ENCODE measurements at regions of chr1 and their contacts with region 1.

Region 1: DNA sequence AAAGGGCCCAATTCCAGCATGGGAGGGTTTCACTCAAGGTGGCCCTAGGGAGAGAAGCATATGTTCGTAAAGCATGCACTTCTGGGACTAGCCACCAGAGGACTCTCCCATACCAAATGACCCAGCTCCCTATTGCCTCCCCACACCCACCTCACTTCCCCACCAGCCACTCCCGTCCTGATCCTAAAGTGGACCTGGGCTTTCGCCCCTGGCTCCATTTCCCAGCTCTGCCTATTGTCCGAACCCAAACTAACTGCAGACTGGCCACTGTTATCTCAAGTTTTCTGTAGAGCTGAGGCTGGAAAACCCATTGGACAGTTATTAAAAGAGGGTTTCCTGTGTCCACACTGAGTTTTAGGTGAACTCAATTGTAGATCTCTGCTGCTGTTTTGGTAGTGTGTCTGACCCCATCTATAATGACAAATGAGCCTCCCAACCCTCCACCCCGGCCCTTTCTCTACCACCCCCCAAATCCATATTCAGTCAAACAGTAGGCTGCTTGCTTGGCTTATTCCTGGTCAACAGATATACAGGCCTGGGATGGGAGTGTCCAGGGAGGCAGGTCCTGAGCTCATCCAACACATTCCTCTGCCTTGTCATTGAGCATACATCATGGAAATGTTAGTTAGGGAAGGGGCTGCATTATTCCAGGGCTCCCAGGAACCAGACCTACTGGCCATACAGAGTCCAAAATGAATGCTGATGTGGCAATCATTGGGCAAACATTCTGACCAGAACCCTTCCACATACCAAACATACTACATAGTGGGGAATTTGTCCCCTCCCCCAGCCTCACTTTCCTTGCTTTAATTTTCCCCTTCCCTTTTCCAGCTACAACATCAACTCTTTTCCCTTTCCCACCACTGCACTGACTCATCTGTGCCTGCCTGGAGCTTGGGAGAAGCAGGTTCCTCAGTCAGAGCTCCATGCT is 59.2 kb downstream of the ABCA4 start:
- DNase-seq: peak; percentile 86
- H3K4me3 ChIP-seq: no peak overlapping the region
- H3K27ac ChIP-seq: peak overlapping the region; percentile 76
- H3K4me1 ChIP-seq: peaks cover 48% of the 10 kb centered on the region
- H3K27me3 ChIP-seq: no peaks in the 10 kb centered on the region
- CTCF ChIP-seq: peak; percentile 92 to 93
- POLR2A ChIP-seq: peak; percentile 36

Region 2: GRCh38 chr1:94039514-94039870 is 22.3 kb before region 1 on chr1:
- CTCF ChIA-PET with region 1: interaction called, 71 read pairs
- POLR2A ChIA-PET with region 1: no interaction called
- dilution Hi-C with region 1: no loop called
- intact Hi-C with region 1: no loop called
- DNase-seq: peak; percentile 88
- H3K4me3 ChIP-seq: no peak overlapping the region
- H3K27ac ChIP-seq: peak overlapping the region; percentile 98
- H3K4me1 ChIP-seq: peaks cover 43% of the 10 kb centered on the region
- H3K27me3 ChIP-seq: no peaks in the 10 kb centered on the region
- CTCF ChIP-seq: peak; percentile 86 to 97
- POLR2A ChIP-seq: no peak

Region 3: GRCh38 chr1:94101541-94102525 is 40.1 kb after region 1 on chr1:
- CTCF ChIA-PET with region 1: interaction called, 24 read pairs
- POLR2A ChIA-PET with region 1: no interaction called
- dilution Hi-C with region 1: no loop called
- intact Hi-C with region 1: no loop called
- DNase-seq: no peak
- H3K4me3 ChIP-seq: no peak overlapping the region
- H3K27ac ChIP-seq: no peak overlapping the region
- H3K4me1 ChIP-seq: peaks cover 9% of the 10 kb centered on the region
- H3K27me3 ChIP-seq: no peaks in the 10 kb centered on the region
- CTCF ChIP-seq: no peak
- POLR2A ChIP-seq: no peak

Region 4: DNA sequence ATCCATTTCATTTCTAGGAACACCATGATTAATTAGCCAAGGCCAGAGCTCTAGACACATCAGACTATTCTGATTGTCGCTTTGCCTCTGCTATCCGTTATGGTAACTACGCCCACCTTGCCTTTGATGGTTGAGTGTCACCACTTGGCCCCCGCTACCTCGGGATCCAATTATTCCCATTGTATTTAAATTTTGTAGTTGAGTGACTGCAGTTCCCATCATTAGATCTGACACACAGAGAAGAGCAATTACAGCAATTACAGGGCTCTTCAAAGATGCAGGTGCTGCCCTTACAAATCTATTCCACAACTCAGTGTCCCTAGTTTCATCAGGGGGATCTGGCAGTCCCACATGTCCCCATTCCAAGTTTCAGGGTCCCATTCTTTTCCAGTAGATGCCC is 104.1 kb after region 1 on chr1:
- CTCF ChIA-PET with region 1: interaction called, 26 read pairs
- POLR2A ChIA-PET with region 1: no interaction called
- dilution Hi-C with region 1: no loop called
- intact Hi-C with region 1: no loop called
- DNase-seq: no peak
- H3K4me3 ChIP-seq: no peak overlapping the region
- H3K27ac ChIP-seq: no peak overlapping the region
- H3K4me1 ChIP-seq: peaks cover 5% of the 10 kb centered on the region
- H3K27me3 ChIP-seq: no peaks in the 10 kb centered on the region
- CTCF ChIP-seq: no peak
- POLR2A ChIP-seq: no peak

Region 5: DNA sequence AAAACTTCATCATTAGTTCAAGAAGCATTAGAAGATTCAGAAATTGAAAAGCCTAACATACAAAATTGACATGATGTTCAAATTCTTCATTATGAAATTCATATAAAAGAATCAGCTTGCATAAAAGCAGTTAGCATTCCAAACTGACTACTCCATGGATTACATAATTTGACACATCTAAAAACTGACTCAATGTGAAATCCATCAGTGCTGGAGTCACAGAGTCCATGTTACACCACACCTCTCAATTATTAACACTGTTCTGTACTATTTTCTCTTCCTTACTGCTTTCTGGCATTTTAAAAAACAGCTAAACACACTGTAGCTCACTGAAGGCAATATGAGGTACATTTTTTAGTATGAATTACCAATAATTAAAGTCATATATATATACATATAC is 147.6 kb after region 1 on chr1:
- CTCF ChIA-PET with region 1: interaction called, 24 read pairs
- POLR2A ChIA-PET with region 1: no interaction called
- dilution Hi-C with region 1: no loop called
- intact Hi-C with region 1: no loop called
- DNase-seq: no peak
- H3K4me3 ChIP-seq: no peak overlapping the region
- H3K27ac ChIP-seq: no peak overlapping the region
- H3K4me1 ChIP-seq: peaks cover 38% of the 10 kb centered on the region
- H3K27me3 ChIP-seq: no peaks in the 10 kb centered on the region
- CTCF ChIP-seq: no peak
- POLR2A ChIP-seq: no peak

Region 6: DNA sequence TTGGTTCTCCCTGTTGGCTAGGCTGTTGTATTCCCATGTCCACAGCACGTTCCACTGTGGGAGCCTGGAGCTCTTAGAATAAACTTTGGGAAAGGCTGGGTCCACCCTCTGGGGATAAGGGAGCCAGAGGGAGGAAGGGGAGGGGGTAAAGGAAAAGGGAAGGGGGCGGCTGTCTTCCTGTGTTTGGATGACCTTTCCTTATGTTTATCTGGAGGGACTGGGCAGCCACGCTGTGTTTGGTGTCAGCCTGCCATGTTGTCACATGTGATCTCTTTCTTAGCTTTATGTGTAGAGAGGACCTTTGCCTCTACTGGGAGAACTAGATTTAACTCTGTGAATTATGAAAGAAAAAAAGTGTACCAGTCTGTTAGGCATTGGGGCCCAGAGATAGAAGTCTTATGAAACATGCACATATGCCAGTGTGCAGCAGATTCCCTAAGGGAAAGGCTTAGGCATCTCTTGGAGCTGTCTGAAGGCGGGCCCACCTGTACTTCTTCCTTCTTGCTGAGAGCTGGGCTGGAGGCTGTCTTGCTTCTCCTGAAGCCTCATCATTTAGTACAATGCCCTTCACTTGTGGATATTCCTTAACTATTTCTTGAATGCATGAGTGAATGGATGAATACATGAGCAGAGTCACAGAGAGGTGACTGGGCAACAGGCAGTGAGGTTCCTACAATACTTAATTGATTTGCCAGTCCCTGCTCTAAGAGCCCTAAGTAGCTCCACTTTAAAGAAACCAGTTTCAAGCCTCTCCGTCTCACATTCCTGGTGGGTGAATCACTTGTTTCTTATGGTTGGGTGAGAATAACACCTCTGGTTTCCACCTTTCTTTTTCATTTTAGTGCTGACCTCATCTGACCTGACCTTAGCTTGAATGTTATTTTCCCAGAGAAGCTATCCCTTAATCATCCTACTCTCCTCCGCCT is 238.1 kb after region 1 on chr1:
- CTCF ChIA-PET with region 1: interaction called, 10 read pairs
- POLR2A ChIA-PET with region 1: no interaction called
- dilution Hi-C with region 1: no loop called
- intact Hi-C with region 1: no loop called
- DNase-seq: peak; percentile 88
- H3K4me3 ChIP-seq: no peak overlapping the region
- H3K27ac ChIP-seq: peak overlapping the region; percentile 70
- H3K4me1 ChIP-seq: peaks cover 81% of the 10 kb centered on the region
- H3K27me3 ChIP-seq: no peaks in the 10 kb centered on the region
- CTCF ChIP-seq: no peak
- POLR2A ChIP-seq: no peak